OCI-LY7 (cell line): ENCODE measurements at regions of chr12 and their contacts with region 1.

Region 1: DNA sequence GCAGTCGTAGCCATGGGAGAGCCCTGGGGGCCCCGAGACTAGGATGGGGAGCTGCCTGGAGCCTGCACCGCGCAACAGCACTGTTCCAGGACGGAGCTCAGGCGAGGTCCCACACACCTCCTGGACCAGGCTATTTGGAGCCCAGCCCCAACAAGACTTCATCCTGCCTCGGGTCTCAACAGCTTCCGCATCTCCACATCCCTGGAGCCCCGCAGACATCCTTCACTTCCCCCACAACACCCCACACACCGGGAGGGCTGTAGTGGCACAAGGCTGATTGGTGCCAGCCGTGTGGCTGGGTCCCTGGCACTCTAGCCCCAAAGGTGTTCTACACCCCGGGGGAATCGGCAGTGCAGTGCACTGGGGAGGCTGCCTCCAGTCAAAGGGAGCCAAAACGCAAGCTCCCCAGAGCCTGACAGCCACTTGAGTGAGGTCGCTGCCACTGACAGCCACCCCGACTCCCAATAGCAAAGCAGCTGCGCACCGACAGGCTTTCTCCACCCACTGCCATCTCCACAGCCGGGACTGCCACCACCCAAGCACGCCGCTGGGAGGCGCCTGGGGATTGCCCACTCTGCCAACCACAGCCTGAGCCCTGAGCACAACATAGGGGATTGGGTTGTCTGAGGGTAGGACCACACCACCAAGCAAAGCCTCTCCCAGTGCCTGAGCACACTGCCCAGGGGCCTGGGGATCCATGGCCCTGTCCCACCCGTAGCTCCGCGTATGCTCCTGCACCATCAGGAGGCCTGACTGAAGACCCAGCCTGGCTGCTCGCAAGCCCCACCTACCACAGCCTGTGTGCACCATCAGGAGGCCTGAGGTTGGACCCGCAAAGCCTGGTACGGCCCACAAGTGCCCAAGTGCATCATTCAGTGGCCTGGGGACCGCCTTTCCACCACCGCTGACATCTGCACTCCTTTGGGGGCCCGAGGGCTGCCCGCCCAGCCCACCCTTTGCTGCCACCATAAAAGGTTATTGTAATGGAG is 13.2 kb upstream of the KLRF1 start:
- DNase-seq: peak; percentile 74
- H3K4me3 ChIP-seq: peak overlapping the region; percentile 60
- H3K27ac ChIP-seq: no peak overlapping the region
- H3K4me1 ChIP-seq: peaks cover 7% of the 10 kb centered on the region
- CTCF ChIP-seq: peak; percentile 95

Region 2: GRCh38 chr12:9786726-9787717 is 27.1 kb before region 1 on chr12:
- CTCF ChIA-PET with region 1: no interaction called
- POLR2A ChIA-PET with region 1: no interaction called
- intact Hi-C with region 1: no loop called
- DNase-seq: no peak
- H3K4me3 ChIP-seq: no peak overlapping the region
- H3K27ac ChIP-seq: no peak overlapping the region
- H3K4me1 ChIP-seq: no peaks in the 10 kb centered on the region
- CTCF ChIP-seq: no peak

Region 3: DNA sequence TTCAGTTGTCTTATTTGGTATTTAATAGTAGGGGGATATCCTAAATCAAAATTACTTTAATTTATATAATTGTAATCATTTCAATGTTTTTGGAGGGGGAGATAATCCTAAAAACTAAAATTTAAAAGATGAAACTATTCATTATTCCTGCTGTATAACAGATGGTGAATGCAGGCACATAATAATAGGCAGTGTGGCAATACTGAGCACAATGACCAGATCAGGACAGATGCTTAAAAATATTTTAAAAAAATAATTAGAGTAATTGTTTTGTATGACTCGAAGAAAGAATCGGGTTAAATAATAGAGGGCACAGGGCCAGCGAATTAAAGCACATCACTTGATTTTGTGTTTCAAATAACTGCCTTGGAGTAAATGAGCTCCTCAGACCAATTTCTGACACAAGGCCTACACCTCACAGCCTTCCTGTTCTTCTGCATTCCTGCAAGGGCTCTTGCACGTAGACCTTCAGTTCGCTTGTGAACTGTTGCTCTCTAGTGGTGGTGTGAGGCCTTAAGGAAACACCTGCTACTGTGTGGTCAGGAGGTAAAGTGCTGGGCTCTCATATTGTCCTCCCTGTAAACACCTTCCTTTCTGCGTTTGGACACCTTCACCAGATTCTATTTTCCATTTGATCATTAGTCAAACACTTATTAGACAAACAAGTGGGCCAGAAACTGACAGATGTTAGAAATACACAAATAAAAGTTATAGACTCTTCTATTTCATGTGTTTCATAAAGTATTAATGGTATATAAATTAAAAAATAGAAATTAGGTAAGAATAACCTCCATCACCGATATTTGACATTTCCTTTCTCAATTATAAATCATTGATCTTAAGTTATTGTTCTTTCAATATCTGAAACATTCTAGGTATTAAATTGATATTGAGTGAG is 16.1 kb before region 1 on chr12:
- CTCF ChIA-PET with region 1: no interaction called
- POLR2A ChIA-PET with region 1: no interaction called
- intact Hi-C with region 1: no loop called
- DNase-seq: peak; percentile 90
- H3K4me3 ChIP-seq: no peak overlapping the region
- H3K27ac ChIP-seq: no peak overlapping the region
- H3K4me1 ChIP-seq: peaks cover 26% of the 10 kb centered on the region
- CTCF ChIP-seq: peak; percentile 91

Region 4: GRCh38 chr12:9851927-9852326 is 37.8 kb after region 1 on chr12:
- CTCF ChIA-PET with region 1: no interaction called
- POLR2A ChIA-PET with region 1: no interaction called
- intact Hi-C with region 1: no loop called
- DNase-seq: no peak
- H3K4me3 ChIP-seq: no peak overlapping the region
- H3K27ac ChIP-seq: no peak overlapping the region
- H3K4me1 ChIP-seq: no peaks in the 10 kb centered on the region
- CTCF ChIP-seq: no peak

Region 5: DNA sequence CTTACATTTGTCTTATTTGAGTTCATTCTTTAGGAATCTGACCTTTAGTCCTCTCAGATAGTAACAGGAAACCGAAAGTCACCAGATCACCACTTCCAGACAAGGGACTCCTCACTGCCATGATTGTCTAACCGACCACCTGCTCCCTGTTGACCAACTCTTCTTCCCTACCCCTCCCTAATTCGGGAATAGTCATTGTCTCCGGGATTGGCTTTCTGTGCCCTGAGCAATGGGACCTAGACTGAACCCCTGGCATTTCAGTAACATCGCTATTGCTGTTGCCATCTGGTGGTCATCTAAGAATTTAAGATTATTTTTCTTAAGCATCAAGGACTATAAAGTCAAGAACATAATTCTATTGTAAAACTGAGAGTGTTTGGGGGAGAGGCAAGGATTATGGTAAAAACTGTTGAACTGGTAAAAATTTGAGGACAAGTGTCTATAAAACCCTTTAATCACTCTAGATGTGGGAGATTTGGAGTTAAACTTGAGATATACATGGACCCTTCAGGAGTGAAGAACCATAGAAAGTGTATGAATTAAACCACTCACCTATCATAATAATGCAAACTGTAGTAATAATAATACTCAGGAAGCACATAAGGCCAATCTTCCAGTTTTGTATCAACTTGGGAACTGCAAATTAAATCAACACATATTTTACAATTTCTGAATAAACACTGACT is 111.7 kb after region 1 on chr12:
- CTCF ChIA-PET with region 1: no interaction called
- POLR2A ChIA-PET with region 1: no interaction called
- intact Hi-C with region 1: loop called (anchors 1 kb)
- DNase-seq: peak; percentile 56
- H3K4me3 ChIP-seq: no peak overlapping the region
- H3K27ac ChIP-seq: no peak overlapping the region
- H3K4me1 ChIP-seq: peaks cover 11% of the 10 kb centered on the region
- CTCF ChIP-seq: peak; percentile 87